ENCODE measurements at regions of chr20 and their contacts with region 1.

Region 1: DNA sequence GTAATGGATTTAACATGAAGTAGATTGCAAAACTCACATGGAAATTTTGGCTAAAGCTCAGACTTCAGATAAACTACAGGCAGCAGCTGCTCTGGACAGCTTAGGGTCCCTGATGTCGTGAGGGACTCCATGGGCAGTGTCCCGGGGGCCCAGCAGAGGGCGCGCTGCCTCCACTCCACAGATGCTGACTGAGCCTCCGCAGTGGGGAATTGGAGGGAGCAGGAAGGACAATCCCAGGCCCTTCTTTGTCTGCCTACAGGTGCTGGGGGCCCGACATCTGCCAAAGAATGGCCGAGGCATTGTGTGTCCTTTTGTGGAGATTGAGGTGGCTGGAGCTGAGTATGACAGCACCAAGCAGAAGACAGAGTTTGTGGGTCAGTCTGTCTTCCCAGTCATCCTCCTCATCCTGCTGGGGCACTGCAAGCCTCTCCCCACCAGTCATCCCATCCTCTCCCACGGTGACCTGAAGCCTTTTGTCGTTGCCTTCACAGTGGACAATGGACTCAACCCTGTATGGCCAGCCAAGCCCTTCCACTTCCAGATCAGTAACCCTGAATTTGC is 35.9 kb downstream of the PLCG1 start:
- DNase-seq: peak; percentile 64
- H3K4me3 ChIP-seq: no peak overlapping the region
- H3K27ac ChIP-seq: no peak overlapping the region
- H3K4me1 ChIP-seq: no peaks in the 10 kb centered on the region
- CTCF ChIP-seq: peak; percentile 95

Region 2: GRCh38 chr20:41339507-41340326 is 166.5 kb after region 1 on chr20:
- CTCF ChIA-PET with region 1: interaction called, 3 read pairs
- POLR2A ChIA-PET with region 1: no interaction called
- intact Hi-C with region 1: loop called (anchors 1 kb)
- DNase-seq: peak; percentile 75
- H3K4me3 ChIP-seq: peak overlapping the region; percentile 30
- H3K27ac ChIP-seq: no peak overlapping the region
- H3K4me1 ChIP-seq: peaks cover 17% of the 10 kb centered on the region
- CTCF ChIP-seq: peak; percentile 97

Region 3: GRCh38 chr20:41482647-41483552 is 309.7 kb after region 1 on chr20:
- CTCF ChIA-PET with region 1: no interaction called
- POLR2A ChIA-PET with region 1: no interaction called
- intact Hi-C with region 1: no loop called
- DNase-seq: no peak
- H3K4me3 ChIP-seq: no peak overlapping the region
- H3K27ac ChIP-seq: no peak overlapping the region
- H3K4me1 ChIP-seq: peaks cover 7% of the 10 kb centered on the region
- CTCF ChIP-seq: no peak

Measured in OCI-LY7 (cell line).